ENCODE measurements at regions of chr7 and their contacts with region 1.

Region 1: DNA sequence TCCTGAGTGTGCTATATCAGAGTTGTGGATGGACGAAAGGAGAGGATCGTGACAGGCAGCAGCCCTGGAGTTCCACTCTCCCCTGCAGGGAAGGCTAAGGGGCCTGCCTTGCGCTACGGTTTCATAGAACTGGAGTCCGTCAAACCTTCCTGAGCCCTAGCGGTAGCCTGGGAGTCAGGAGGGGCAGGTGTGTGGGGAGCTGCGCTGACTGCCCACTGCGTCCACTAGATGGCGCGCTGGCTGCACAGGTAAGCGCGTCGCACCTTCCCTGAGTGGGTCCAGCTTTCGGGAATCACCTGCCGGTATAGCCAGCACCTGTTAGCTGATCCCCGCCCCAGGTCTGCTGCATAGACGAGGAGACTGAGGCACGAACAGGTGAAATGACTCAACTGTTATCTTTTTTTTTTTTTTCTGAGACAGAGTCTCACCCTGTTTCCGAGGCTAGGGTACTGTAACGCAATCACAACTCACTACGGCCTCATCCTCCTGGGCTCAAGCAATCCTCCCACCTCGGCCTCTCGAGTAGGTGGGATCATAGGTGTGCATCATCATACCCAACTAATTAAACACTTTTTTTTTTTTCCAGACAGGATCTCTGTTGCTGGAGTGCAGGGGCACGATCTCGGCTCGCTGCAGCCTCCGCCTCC is 20.2 kb upstream of the BAIAP2L1 start:
- DNase-seq: peak; percentile 36
- H3K4me3 ChIP-seq: no peak overlapping the region
- H3K27ac ChIP-seq: no peak overlapping the region
- H3K4me1 ChIP-seq: peaks cover 13% of the 10 kb centered on the region
- H3K27me3 ChIP-seq: no peaks in the 10 kb centered on the region
- CTCF ChIP-seq: peak; percentile 79 to 95
- POLR2A ChIP-seq: no peak

Region 2: GRCh38 chr7:97680622-97681021 is 740.5 kb before region 1 on chr7:
- CTCF ChIA-PET with region 1: no interaction called
- POLR2A ChIA-PET with region 1: no interaction called
- dilution Hi-C with region 1: no loop called
- intact Hi-C with region 1: no loop called
- DNase-seq: no peak
- H3K4me3 ChIP-seq: no peak overlapping the region
- H3K27ac ChIP-seq: no peak overlapping the region
- H3K4me1 ChIP-seq: no peaks in the 10 kb centered on the region
- H3K27me3 ChIP-seq: no peaks in the 10 kb centered on the region
- CTCF ChIP-seq: no peak
- POLR2A ChIP-seq: no peak

Region 3: GRCh38 chr7:98280791-98281756 is 140.0 kb before region 1 on chr7 and contains the start of gene BRI3:
- CTCF ChIA-PET with region 1: interaction called, 3 read pairs
- POLR2A ChIA-PET with region 1: no interaction called
- dilution Hi-C with region 1: no loop called
- intact Hi-C with region 1: loop called (anchors 5 kb)
- DNase-seq: peak; percentile 79
- H3K4me3 ChIP-seq: peak within 1 kb of the TSS; percentile 20 to 95 (median 83)
- H3K27ac ChIP-seq: peak within 1 kb of the TSS; percentile 72
- H3K4me1 ChIP-seq: peaks cover 31% of the 10 kb centered on the region
- H3K27me3 ChIP-seq: no peaks in the 10 kb centered on the region
- CTCF ChIP-seq: peak in 1 of 2 donors; percentile 8
- POLR2A ChIP-seq: peak; percentile 74
- total RNA-seq, gene BRI3: 284 and 317 TPM in 2 replicates

Region 4: GRCh38 chr7:98360221-98361124 is 60.6 kb before region 1 on chr7:
- CTCF ChIA-PET with region 1: no interaction called
- POLR2A ChIA-PET with region 1: no interaction called
- dilution Hi-C with region 1: no loop called
- intact Hi-C with region 1: no loop called
- DNase-seq: no peak
- H3K4me3 ChIP-seq: no peak overlapping the region
- H3K27ac ChIP-seq: no peak overlapping the region
- H3K4me1 ChIP-seq: peaks cover 4% of the 10 kb centered on the region
- H3K27me3 ChIP-seq: no peaks in the 10 kb centered on the region
- CTCF ChIP-seq: no peak
- POLR2A ChIP-seq: no peak

Region 5: GRCh38 chr7:98409843-98410242 is 11.2 kb before region 1 on chr7:
- CTCF ChIA-PET with region 1: interaction called, 14 read pairs
- POLR2A ChIA-PET with region 1: no interaction called
- dilution Hi-C with region 1: no loop called
- intact Hi-C with region 1: no loop called
- DNase-seq: no peak
- H3K4me3 ChIP-seq: no peak overlapping the region
- H3K27ac ChIP-seq: no peak overlapping the region
- H3K4me1 ChIP-seq: no peaks in the 10 kb centered on the region
- H3K27me3 ChIP-seq: no peaks in the 10 kb centered on the region
- CTCF ChIP-seq: no peak
- POLR2A ChIP-seq: no peak

Region 6: DNA sequence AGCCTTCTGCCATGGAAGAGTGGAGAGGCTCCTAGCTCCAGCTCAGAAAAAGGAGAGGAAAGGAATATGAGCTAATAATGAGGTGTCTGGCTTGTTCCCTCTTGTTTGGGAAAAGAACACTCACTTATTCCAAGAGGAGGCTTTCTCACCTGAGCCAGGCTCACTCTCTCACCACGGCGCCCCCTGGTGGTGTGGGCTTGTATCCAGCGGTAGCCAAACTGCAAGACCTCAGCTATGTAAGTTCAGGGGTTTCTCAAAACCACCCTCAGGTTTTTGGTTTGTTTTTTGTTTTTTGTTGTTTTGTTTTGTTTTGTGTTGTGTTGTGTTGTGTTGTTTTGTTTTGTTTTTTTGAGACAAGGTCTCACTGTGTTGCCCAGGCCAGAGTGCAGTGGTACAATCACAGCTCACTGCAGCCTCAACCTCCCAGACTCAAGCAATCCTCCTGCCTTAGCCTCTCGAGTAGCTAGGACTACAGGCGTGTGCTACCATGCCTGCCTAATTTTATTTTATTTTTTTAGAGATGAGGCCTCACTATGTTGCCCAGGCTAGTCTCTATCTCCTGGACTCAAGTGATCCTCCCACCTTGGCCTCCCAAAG is 324.7 kb after region 1 on chr7:
- CTCF ChIA-PET with region 1: interaction called, 40 read pairs
- POLR2A ChIA-PET with region 1: no interaction called
- dilution Hi-C with region 1: no loop called
- intact Hi-C with region 1: loop called (anchors 1 kb)
- DNase-seq: peak; percentile 39
- H3K4me3 ChIP-seq: no peak overlapping the region
- H3K27ac ChIP-seq: no peak overlapping the region
- H3K4me1 ChIP-seq: no peaks in the 10 kb centered on the region
- H3K27me3 ChIP-seq: no peaks in the 10 kb centered on the region
- CTCF ChIP-seq: peak; percentile 68 to 89
- POLR2A ChIP-seq: no peak

Region 7: DNA sequence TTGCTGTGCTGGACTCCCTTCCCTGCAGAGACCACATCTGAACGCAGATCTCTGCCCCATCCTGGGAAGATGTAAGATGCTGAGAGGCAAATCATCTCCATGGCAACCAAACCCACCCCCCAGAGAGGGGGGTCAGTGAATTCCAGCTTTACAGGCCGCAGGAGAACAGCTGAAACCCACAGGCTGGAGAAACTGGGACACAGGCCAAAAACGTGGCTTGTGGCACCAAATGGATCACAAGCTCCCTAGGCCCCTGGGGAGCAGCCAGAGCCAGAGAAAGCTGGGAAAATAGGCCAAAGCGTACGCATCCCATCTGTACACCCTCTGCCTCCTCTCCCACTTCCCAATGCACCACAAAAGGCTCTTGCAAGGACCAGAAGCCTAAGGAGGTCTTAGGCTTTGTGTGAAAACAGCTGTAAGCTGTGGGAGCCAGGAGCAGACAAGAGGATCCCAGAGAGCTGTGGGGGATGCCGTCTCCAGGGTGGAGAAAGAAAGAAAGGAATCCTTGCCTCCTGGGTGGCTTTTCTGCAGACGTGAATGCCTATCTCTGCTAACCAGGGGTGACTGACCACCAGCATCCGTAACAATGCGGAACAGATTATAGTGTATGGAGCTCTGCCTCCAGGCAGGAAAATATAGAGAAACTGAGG is 389.2 kb after region 1 on chr7:
- CTCF ChIA-PET with region 1: no interaction called
- POLR2A ChIA-PET with region 1: no interaction called
- dilution Hi-C with region 1: no loop called
- intact Hi-C with region 1: no loop called
- DNase-seq: no peak
- H3K4me3 ChIP-seq: no peak overlapping the region
- H3K27ac ChIP-seq: no peak overlapping the region
- H3K4me1 ChIP-seq: no peaks in the 10 kb centered on the region
- H3K27me3 ChIP-seq: no peaks in the 10 kb centered on the region
- CTCF ChIP-seq: no peak
- POLR2A ChIP-seq: no peak

Region 8: DNA sequence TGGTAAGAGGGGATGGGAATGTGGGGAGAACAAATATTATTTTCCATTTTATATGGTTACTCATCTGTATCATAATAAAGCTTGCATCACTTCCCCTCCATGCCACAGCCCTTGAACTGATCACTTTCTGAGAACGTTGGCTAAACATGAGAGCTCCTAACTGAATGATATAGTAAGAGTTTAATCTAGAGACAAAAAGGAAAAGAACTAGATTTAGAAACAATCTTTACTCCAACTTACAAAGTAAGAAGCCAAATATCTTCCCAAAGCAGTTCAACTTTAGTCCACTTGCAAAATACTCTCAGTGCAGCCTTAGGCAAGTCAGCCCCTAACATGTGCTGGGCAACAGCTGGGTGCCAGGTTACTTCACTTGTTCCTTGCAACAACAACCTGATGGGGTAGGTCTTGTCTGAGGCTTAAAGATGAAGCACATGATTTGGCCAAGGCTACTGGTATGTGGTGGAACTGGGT is 702.5 kb after region 1 on chr7:
- CTCF ChIA-PET with region 1: no interaction called
- POLR2A ChIA-PET with region 1: no interaction called
- dilution Hi-C with region 1: no loop called
- intact Hi-C with region 1: no loop called
- DNase-seq: peak; percentile 29
- H3K4me3 ChIP-seq: no peak overlapping the region
- H3K27ac ChIP-seq: no peak overlapping the region
- H3K4me1 ChIP-seq: peaks cover 10% of the 10 kb centered on the region
- H3K27me3 ChIP-seq: no peaks in the 10 kb centered on the region
- CTCF ChIP-seq: no peak
- POLR2A ChIP-seq: no peak

Measured in endothelial cell of umbilical vein (primary cell).